Prostate gland (tissue), 2 donors: ENCODE measurements at regions of chr3 and their contacts with region 1.

Region 1: DNA sequence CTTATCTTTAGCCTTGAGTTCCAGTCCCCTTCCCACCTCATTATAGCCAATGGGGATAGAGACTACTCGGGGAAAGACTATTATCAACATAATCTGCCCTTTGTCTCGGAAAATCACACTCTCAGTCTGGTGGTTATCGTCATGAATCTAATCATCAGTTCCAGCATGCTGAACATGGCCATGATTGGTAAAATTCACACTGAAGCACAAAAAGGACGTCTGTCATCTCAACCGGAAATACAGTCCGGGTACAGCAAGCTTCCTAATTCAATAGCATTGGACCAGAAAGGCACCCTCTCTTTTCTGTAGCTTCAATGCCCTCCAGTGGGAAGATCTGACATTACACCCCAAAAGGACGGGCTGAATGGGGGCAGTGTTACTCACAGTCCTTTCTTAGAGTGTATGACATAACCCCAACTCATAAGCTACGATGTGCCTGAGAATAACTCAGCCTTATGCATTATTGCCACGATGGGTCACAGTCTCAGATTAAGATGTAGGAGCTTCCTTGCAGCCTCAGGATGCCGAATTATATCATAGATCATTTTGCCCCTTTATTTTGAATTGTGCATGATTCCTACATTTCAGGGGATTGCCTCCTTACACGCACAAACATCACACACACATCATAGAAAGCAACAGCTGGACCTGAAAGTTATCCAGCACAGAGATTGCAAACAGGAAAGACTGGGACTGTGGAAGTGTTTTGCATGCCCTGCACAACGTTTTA is 390.4 kb upstream of the LMCD1 start:
- DNase-seq: peak; percentile 38
- H3K4me3 ChIP-seq: no peak overlapping the region
- H3K27ac ChIP-seq: no peak overlapping the region
- H3K4me1 ChIP-seq: no peaks in the 10 kb centered on the region
- H3K27me3 ChIP-seq: no peaks in the 10 kb centered on the region
- CTCF ChIP-seq: peak; percentile 15 to 76 (median 57)
- POLR2A ChIP-seq: no peak

Region 2: GRCh38 chr3:6799264-6799915 is 1311.8 kb before region 1 on chr3:
- intact Hi-C with region 1: loop called (anchors 10 kb)
- DNase-seq: peak; percentile 10
- H3K4me3 ChIP-seq: no peak overlapping the region
- H3K27ac ChIP-seq: no peak overlapping the region
- H3K4me1 ChIP-seq: no peaks in the 10 kb centered on the region
- H3K27me3 ChIP-seq: no peaks in the 10 kb centered on the region
- CTCF ChIP-seq: peak in 3 of 4 experiments; percentile 51 to 72 (median 59)
- POLR2A ChIP-seq: no peak

Region 3: DNA sequence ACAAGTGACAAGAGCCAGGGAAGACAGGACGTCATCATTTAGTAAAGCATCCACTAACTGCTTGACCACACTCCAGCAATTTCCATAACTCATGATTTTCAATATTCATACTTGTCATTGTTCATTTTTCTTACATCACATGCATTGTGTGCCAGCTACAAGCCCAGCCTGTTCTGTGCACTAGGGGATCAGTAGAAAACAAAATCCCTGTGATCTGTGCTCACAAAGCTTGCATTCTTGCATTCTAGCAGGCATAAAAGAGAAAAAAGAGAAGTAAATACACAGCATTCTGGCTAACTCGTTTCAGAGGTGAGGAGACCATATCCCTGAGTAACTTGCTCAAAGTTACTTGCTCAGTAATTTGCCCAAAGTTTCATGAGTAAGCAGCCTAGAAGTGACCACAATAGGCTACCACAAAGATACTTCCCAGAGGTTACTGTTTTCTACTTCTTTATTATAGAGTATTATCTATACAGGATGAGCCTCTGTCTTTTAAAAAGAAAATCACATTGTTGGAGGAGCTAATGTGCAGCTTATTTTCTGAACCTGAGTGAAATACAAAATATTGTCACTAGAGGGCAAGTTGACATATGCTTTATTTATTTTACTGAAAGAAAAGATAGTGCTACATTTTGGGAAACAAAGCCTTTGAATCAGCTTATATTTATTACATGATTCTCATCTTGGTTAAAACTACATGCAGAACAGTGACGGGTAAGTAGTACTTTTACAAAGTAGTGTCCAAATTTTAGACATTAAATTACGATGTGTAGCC is 311.0 kb before region 1 on chr3:
- intact Hi-C with region 1: loop called (anchors 10 kb)
- DNase-seq: no peak
- H3K4me3 ChIP-seq: no peak overlapping the region
- H3K27ac ChIP-seq: no peak overlapping the region
- H3K4me1 ChIP-seq: no peaks in the 10 kb centered on the region
- H3K27me3 ChIP-seq: no peaks in the 10 kb centered on the region
- CTCF ChIP-seq: peak in 1 of 4 experiments; percentile 5
- POLR2A ChIP-seq: no peak